WTC11 (cell line): ENCODE measurements at regions of chr17 and their contacts with region 1.

Region 1: DNA sequence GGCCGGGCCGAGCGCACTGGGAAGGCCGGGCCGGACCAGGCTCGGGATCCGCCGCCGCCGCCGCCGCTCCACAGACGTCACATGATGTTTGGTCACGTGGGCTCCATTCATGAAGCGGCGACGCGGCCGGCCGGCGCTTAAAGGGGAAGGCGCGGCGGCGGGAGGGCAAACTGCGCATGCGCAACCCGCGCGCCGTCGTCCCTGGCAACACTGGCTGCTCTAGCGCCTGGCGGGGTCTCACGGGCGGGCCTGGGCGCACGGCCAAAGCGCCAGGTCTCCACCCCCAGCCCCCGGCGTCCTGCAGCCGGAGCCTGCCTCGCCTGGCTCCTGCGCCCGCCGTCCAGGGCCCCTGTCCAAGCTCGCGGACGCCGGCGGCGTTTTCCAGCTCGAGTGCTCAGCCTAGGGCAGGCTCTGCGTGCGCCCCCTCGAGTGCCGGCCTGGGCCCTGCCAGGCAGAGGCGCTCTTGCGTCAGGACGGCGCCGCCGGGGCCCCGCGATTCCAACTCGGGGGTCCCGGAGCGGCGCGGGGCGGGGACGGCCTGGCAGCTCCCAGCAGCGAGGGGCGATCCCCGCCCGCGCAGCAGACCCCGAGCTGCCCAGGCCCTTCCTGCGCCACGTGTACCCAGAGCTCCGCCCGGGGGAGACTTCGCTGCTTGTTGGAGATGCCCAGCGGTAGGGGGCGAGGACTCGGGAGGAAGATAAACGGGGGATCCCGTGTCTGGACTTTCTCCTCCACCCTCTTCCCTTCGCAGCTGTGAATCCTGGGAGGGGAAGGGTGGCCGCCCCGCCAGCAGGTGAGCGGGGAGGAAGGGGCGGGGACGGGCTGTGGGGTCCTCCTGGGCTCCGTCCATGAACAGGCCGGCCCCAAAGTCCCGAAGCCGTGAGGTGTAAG is at the start of gene MAFG:
- DNase-seq: peak; percentile 90
- ATAC-seq: peak; percentile 43
- H3K4me3 Mint-ChIP-seq: peak within 1 kb of the TSS; percentile 75
- H3K27ac Mint-ChIP-seq: no peak within 1 kb of the TSS
- H3K4me1 Mint-ChIP-seq: peaks cover 27% of the 10 kb centered on the region
- H3K27me3 Mint-ChIP-seq: peaks cover 3% of the 10 kb centered on the region; the same call in 1 of the 2 replicates
- CTCF ChIP-seq: no peak
- total RNA-seq, gene MAFG: 24.2 to 29.8 TPM (median 24.3 TPM) in 3 replicates

Region 2: GRCh38 chr17:81911277-81911961 is 16.5 kb before region 1 on chr17 and contains the start of gene PCYT2:
- CTCF ChIA-PET with region 1: interaction called, 15 read pairs
- POLR2A ChIA-PET with region 1: interaction called, 11 read pairs
- DNase-seq: peak; percentile 96
- ATAC-seq: peak; percentile 95
- H3K4me3 Mint-ChIP-seq: peak within 1 kb of the TSS; percentile 80
- H3K27ac Mint-ChIP-seq: no peak within 1 kb of the TSS; the same call in 1 of the 2 replicates
- H3K4me1 Mint-ChIP-seq: peaks cover 3% of the 10 kb centered on the region; the same call in 1 of the 2 replicates
- H3K27me3 Mint-ChIP-seq: no peaks in the 10 kb centered on the region
- CTCF ChIP-seq: no peak
- total RNA-seq, gene PCYT2: 24.7 to 31.4 TPM (median 26.3 TPM) in 3 replicates

Region 3: GRCh38 chr17:81917565-81918332 is 10.1 kb before region 1 on chr17 and contains the start of gene SIRT7:
- CTCF ChIA-PET with region 1: interaction called, 5 read pairs
- POLR2A ChIA-PET with region 1: interaction called, 11 read pairs
- DNase-seq: peak; percentile 75
- ATAC-seq: peak; percentile 74
- H3K4me3 Mint-ChIP-seq: peak within 1 kb of the TSS; percentile 80
- H3K27ac Mint-ChIP-seq: peak within 1 kb of the TSS; percentile 93
- H3K4me1 Mint-ChIP-seq: peaks cover 14% of the 10 kb centered on the region
- H3K27me3 Mint-ChIP-seq: no peaks in the 10 kb centered on the region
- CTCF ChIP-seq: no peak
- total RNA-seq, gene SIRT7: 19.5 to 24.2 TPM (median 20.9 TPM) in 3 replicates

Region 4: DNA sequence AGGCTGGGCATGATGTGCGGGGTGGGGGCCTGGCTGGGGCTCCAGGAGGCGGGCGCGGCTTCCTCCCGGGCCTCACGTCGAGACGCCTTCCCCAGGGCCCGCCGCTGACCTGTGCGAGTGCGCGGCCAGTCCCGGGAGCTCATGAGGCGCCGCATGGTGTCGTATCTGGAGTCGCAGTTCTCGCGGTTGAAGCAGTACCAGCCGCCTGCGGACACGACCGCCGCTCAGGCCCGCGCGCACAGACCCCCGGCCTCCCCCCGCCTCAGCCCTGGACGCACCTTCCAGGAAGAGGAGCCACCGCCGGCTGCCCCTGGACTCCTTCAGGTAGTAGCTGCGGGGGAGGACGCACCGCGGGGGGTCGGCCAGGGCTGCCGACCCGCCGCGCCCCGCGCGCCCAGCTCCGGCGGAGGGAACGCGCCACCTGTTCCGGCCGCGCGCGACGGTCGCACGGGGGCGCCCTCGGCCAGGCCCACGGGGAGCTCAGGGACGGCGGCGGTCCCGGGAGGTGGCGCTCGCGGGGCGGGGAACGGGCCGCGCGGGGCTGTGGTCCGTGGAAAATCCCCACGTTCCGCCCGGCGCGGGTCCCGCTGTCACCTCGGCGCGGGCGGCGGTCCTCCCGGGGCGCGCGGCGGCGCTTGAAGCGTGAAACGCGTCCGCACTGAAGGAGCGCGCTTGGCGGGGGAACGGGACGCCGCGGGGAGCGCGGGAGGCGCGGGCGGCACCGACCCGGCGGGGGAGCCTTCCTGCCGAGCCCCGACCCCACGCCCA is 31.6 kb after region 1 on chr17:
- CTCF ChIA-PET with region 1: interaction called, 11 read pairs
- POLR2A ChIA-PET with region 1: interaction called, 3 read pairs
- DNase-seq: peak; percentile 70
- ATAC-seq: peak; percentile 29
- H3K4me3 Mint-ChIP-seq: peak overlapping the region; percentile 51
- H3K27ac Mint-ChIP-seq: no peak overlapping the region
- H3K4me1 Mint-ChIP-seq: 0 out of 2 replicates have a peak, but pooled peaks cover 4% of the 10 kb centered on the region
- H3K27me3 Mint-ChIP-seq: peaks cover 67% of the 10 kb centered on the region
- CTCF ChIP-seq: 0 out of 2 replicates have a peak, but pooled peaks have one; percentile 17

Region 5: GRCh38 chr17:82089723-82090548 is 162.0 kb after region 1 on chr17:
- CTCF ChIA-PET with region 1: no interaction called
- POLR2A ChIA-PET with region 1: no interaction called
- DNase-seq: no peak
- ATAC-seq: no peak
- H3K4me3 Mint-ChIP-seq: no peak overlapping the region
- H3K27ac Mint-ChIP-seq: no peak overlapping the region
- H3K4me1 Mint-ChIP-seq: no peaks in the 10 kb centered on the region
- H3K27me3 Mint-ChIP-seq: no peaks in the 10 kb centered on the region
- CTCF ChIP-seq: no peak